Thyroid gland (tissue), 4 donors: ENCODE measurements at regions of chr1 and their contacts with region 1.

Region 1: DNA sequence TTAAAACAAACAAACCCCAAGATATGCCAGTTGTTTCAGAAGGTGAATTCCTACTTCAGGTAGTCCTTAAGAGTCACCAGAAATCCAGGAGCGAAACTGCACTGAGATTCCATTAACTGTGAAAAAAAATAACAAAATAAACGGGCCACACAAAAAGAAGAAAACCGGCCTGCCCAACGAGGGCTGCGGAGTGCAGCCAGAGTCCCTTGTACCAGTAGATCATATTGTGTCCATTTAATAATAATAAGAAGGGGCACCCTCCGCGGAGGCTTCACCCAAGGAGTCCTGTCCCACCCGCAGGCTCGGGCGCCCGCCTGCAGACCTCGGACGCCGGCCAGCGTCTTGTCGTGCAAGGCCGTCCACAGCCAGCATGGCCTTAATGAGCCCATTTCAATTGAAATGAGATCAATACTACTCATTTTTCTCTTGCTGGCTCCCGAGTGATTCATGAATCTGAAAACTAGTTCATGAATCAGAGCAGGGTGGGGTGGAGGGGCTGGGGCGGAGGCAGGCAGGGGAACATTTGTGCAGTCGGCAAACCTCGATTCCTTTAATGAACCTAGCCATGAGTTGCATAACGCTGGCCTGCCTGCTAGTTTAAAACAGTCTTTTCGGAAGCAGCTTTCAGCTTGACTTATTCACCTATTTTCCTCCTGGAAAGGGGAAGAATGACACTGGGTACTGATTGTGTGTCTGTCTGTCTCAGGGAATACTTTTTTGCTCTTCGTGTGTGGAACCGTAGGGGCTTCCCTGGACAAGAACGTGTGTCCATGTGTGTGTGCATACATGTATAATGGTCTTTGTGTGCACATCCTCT is 113.1 kb upstream of the IRF2BP2 start:
- DNase-seq: peak; percentile 61 to 63
- H3K4me3 ChIP-seq: no peak overlapping the region
- H3K27ac ChIP-seq: peak overlapping the region; percentile 97 to 100 (median 99)
- H3K4me1 ChIP-seq: peaks cover 87 to 96% of the 10 kb centered on the region in 2 donors
- H3K27me3 ChIP-seq: no peaks in the 10 kb centered on the region
- CTCF ChIP-seq: no peak
- POLR2A ChIP-seq: no peak

Region 2: GRCh38 chr1:234907940-234908405 is 184.9 kb after region 1 on chr1:
- intact Hi-C with region 1: no loop called
- DNase-seq: no peak
- H3K4me3 ChIP-seq: no peak overlapping the region
- H3K27ac ChIP-seq: peak overlapping the region; percentile 61 to 74 (median 72)
- H3K4me1 ChIP-seq: peaks cover 22 to 38% of the 10 kb centered on the region in 2 donors
- H3K27me3 ChIP-seq: no peaks in the 10 kb centered on the region
- CTCF ChIP-seq: no peak
- POLR2A ChIP-seq: no peak

Region 3: GRCh38 chr1:234980645-234981396 is 257.7 kb after region 1 on chr1:
- intact Hi-C with region 1: loop called (anchors 10 kb)
- DNase-seq: peak; percentile 56 to 59
- H3K4me3 ChIP-seq: no peak overlapping the region
- H3K27ac ChIP-seq: peak overlapping the region; percentile 75 to 90 (median 87)
- H3K4me1 ChIP-seq: peaks cover 35 to 78% of the 10 kb centered on the region in 2 donors
- H3K27me3 ChIP-seq: no peaks in the 10 kb centered on the region
- CTCF ChIP-seq: no peak
- POLR2A ChIP-seq: no peak